PC-9 (cell line): ENCODE measurements at regions of chr7 and their contacts with region 1.

Region 1: DNA sequence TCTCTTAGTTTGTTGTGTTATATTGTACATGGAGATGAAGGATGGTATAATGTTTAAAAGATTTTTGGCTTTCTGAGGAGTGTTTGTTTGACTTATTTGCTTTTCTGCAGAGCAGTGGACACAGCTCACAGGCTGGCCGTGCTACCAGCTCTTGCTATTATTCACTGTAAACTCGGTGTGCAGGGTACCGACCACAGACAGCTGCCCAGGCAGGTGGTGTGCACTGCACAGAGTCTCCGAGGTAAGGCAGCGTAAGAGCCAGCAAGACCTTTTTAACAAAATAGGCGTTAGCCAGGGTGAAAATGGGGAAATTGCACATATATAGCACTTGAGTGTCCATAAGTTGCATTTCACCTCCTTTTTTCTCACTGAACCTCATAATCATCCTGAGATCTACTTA is 438.0 kb downstream of the CNTNAP2 start:
- DNase-seq: no peak
- H3K4me3 ChIP-seq: no peak overlapping the region
- H3K27ac ChIP-seq: no peak overlapping the region
- H3K4me1 ChIP-seq: no peaks in the 10 kb centered on the region
- H3K27me3 ChIP-seq: no peaks in the 10 kb centered on the region; the same call in 1 of the 2 replicates
- CTCF ChIP-seq: no peak

Region 2: GRCh38 chr7:145106001-145106400 is 1448.6 kb before region 1 on chr7:
- CTCF ChIA-PET with region 1: interaction called, 12 read pairs
- POLR2A ChIA-PET with region 1: no interaction called
- intact Hi-C with region 1: no loop called
- DNase-seq: peak; percentile 6 to 47
- H3K4me3 ChIP-seq: no peak overlapping the region
- H3K27ac ChIP-seq: no peak overlapping the region
- H3K4me1 ChIP-seq: no peaks in the 10 kb centered on the region
- H3K27me3 ChIP-seq: no peaks in the 10 kb centered on the region
- CTCF ChIP-seq: no peak

Region 3: DNA sequence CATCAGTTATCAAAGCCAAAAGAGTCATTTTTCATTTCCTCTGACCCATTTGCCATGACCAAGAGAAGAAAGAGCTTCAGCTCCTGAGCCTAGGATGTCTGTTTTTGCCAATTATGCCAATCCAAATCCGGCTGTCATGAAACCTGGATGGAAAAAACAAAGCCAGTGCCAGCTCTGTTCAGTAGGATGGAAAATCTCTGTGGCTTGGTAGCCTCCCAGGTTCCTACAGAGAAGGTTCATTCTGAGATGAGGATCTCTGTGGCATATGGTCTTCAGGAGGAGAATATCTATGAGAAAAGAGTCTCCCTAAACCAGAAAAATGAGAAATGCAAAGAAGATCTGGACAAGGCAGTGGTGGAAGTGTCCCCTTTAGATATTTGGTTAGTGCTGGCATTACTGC is 37.4 kb after region 1 on chr7:
- CTCF ChIA-PET with region 1: no interaction called
- POLR2A ChIA-PET with region 1: no interaction called
- intact Hi-C with region 1: loop called (anchors 1 kb)
- DNase-seq: no peak
- H3K4me3 ChIP-seq: no peak overlapping the region
- H3K27ac ChIP-seq: no peak overlapping the region
- H3K4me1 ChIP-seq: no peaks in the 10 kb centered on the region
- H3K27me3 ChIP-seq: no peaks in the 10 kb centered on the region
- CTCF ChIP-seq: no peak

Region 4: GRCh38 chr7:146635205-146636032 is 80.9 kb after region 1 on chr7:
- CTCF ChIA-PET with region 1: no interaction called
- POLR2A ChIA-PET with region 1: no interaction called
- intact Hi-C with region 1: no loop called
- DNase-seq: no peak
- H3K4me3 ChIP-seq: no peak overlapping the region
- H3K27ac ChIP-seq: no peak overlapping the region
- H3K4me1 ChIP-seq: no peaks in the 10 kb centered on the region
- H3K27me3 ChIP-seq: peaks cover 7% of the 10 kb centered on the region; the same call in 1 of the 2 replicates
- CTCF ChIP-seq: no peak